Naive thymus-derived CD4-positive, alpha-beta T cell (primary cell): ENCODE measurements at regions of chr4 and their contacts with region 1.

Region 1: GRCh38 chr4:119261986-119262385 is 49.5 kb downstream of the USP53 start:
- DNase-seq: no peak
- ATAC-seq: no peak
- H3K4me3 ChIP-seq: no peak overlapping the region
- H3K4me3 Mint-ChIP-seq: no peak overlapping the region
- H3K27ac ChIP-seq: no peak overlapping the region
- H3K27ac Mint-ChIP-seq: no peak overlapping the region
- H3K4me1 ChIP-seq: no peaks in the 10 kb centered on the region
- H3K4me1 Mint-ChIP-seq: peaks cover 0 to 14% (median 1%) of the 10 kb centered on the region in 7 donors
- H3K27me3 ChIP-seq: no peaks in the 10 kb centered on the region
- H3K27me3 Mint-ChIP-seq: no peaks in the 10 kb centered on the region

Region 2: DNA sequence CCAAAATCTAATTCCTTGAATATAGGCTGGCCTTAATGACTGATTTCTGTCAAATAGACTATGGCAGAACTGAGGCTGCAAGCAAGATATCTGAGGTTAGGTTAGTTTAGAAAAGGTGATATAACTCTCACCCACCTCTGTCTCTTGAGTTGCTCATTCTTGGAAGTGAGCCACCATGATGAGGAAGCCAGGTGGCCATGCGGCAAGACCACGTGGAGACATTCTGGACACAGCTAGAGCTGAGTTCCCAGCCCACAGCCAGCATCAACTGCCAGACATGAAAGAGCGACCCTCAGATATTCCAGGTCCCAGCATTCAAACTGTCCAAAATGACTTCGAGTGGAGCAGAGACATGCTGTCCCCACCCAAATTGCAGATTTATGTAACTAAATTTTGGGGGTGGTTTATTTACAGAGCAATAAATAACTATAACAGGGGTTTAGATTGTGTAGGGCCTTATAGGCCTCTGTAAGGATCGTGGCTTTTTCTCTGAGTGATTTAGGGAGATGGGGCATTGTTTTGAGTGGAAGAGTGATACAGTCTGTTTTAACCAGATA is 15.7 kb before region 1 on chr4:
- CTCF ChIA-PET with region 1: no interaction called
- POLR2A ChIA-PET with region 1: no interaction called
- intact Hi-C with region 1: loop called in 1 of 2 experiments (anchors 2 kb)
- DNase-seq: no peak
- ATAC-seq: no peak
- H3K4me3 ChIP-seq: no peak overlapping the region
- H3K4me3 Mint-ChIP-seq: no peak overlapping the region
- H3K27ac ChIP-seq: no peak overlapping the region
- H3K27ac Mint-ChIP-seq: peak overlapping the region in 4 of 9 donors; percentile 24 to 67 (median 56)
- H3K4me1 ChIP-seq: no peaks in the 10 kb centered on the region
- H3K4me1 Mint-ChIP-seq: peaks cover 0 to 31% (median 0%) of the 10 kb centered on the region in 7 donors
- H3K27me3 ChIP-seq: no peaks in the 10 kb centered on the region
- H3K27me3 Mint-ChIP-seq: no peaks in the 10 kb centered on the region

Region 3: DNA sequence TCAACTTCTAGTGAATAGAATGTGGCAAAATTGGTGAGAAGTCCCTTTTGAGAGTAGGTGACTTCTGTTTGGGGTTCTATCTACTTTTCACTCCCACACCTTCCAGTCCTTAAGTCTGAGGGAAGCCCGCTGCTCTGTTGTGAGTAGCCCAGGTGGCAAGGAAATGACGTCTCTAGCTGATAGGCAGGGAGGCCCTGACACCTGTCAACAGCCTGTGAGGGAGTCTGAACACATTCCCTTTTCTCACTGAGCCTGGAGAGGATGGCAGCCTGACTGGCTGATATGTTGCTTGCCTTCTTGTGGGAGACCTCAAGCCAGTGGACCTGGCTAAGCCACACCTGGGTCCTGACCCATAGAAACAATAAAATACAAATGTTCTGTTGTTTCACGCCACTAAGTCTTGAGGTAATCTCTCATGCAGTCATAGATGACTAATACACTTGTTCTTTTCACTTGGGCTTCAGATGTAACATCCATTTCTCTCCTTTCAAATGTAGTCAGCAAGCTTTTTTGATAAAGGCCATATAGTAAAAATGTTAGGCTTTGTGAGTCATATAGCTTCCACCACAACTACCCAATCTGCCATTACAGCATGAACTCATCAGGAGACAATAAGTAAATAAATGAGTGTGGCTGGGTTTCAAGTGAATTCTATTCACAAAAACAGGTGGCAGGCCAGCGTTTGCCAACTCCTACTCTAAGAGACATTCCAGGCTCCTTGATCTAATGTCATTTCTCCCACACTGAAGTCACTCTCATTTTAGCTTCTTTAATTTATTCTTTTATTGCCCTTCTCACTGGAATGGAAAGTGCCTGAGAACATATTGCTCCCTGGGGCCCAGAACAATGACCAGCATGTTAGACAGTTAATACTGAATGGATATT is 1069.7 kb after region 1 on chr4:
- CTCF ChIA-PET with region 1: no interaction called
- POLR2A ChIA-PET with region 1: no interaction called
- intact Hi-C with region 1: no loop called
- DNase-seq: no peak
- ATAC-seq: no peak
- H3K4me3 ChIP-seq: no peak overlapping the region
- H3K4me3 Mint-ChIP-seq: no peak overlapping the region
- H3K27ac ChIP-seq: no peak overlapping the region
- H3K27ac Mint-ChIP-seq: no peak overlapping the region
- H3K4me1 ChIP-seq: no peaks in the 10 kb centered on the region
- H3K4me1 Mint-ChIP-seq: no peaks in the 10 kb centered on the region
- H3K27me3 ChIP-seq: no peaks in the 10 kb centered on the region
- H3K27me3 Mint-ChIP-seq: peaks cover 0 to 10% (median 4%) of the 10 kb centered on the region in 5 donors